ENCODE measurements at regions of chr4 and their contacts with region 1.

Region 1: DNA sequence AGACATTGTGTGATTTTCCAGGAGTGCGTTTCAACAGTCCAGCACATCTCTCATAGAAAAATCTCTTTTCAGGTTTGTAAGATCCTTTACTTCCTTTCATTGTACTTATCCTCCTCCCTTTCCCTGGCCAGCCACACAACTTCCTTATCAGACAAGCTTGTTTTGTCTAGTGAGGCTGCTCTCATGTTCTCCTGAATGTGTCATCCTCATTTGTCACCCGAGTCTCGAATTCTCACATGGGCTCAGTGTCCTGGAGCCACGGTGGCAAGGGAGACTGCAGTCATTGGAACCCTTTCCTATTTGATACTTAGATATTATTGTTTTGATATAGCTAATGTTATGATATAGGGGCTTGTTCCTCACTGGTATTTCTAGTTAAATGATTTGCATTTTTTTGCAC is 16.9 kb downstream of the SYNPO2 start:
- DNase-seq: no peak
- H3K4me3 ChIP-seq: peak overlapping the region in 1 of 2 donors; percentile 40
- H3K27ac ChIP-seq: peak overlapping the region; percentile 82 to 89
- H3K4me1 ChIP-seq: peaks cover 8 to 58% of the 10 kb centered on the region in 2 donors
- H3K27me3 ChIP-seq: no peaks in the 10 kb centered on the region
- CTCF ChIP-seq: no peak

Region 2: GRCh38 chr4:117357437-117357836 is 1548.1 kb before region 1 on chr4:
- intact Hi-C with region 1: no loop called
- DNase-seq: no peak
- H3K4me3 ChIP-seq: no peak overlapping the region
- H3K27ac ChIP-seq: no peak overlapping the region
- H3K4me1 ChIP-seq: no peaks in the 10 kb centered on the region
- H3K27me3 ChIP-seq: no peaks in the 10 kb centered on the region
- CTCF ChIP-seq: no peak

Region 3: GRCh38 chr4:118888666-118889311 is 16.8 kb before region 1 on chr4 and contains the start of gene SYNPO2:
- intact Hi-C with region 1: no loop called
- DNase-seq: peak; percentile 34 to 94
- H3K4me3 ChIP-seq: peak within 1 kb of the TSS; percentile 68 to 77
- H3K27ac ChIP-seq: peak within 1 kb of the TSS; percentile 70 to 89
- H3K4me1 ChIP-seq: peaks cover 0 to 4% of the 10 kb centered on the region in 2 donors
- H3K27me3 ChIP-seq: no peaks in the 10 kb centered on the region
- CTCF ChIP-seq: no peak
- total RNA-seq, gene SYNPO2: 178 TPM

Region 4: GRCh38 chr4:118920247-118920646 is 14.7 kb after region 1 on chr4:
- intact Hi-C with region 1: loop called (anchors 2 kb)
- DNase-seq: peak in 1 of 2 donors; percentile 75
- H3K4me3 ChIP-seq: peak overlapping the region in 1 of 2 donors; percentile 11
- H3K27ac ChIP-seq: peak overlapping the region; percentile 72 to 78
- H3K4me1 ChIP-seq: peaks cover 11 to 70% of the 10 kb centered on the region in 2 donors
- H3K27me3 ChIP-seq: no peaks in the 10 kb centered on the region
- CTCF ChIP-seq: no peak

Region 5: DNA sequence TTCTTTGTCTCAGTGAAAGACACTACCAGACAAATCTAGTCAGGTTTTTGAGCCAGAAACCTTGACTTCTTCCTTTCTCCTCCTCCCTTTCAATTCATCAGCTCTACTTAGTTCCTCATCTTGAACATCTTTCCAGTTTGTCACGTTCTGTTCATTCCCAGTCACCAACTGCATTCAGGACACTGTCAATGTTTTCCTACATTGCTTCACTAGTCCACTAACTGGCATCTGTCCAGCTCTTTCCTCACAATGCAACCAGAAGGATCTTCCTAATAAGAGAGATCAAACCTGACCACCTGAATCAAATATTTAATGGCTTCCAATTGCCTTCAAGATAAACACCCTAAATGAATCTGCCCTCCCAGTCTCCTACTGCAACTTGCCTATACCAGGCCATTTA is 35.6 kb after region 1 on chr4:
- intact Hi-C with region 1: loop called (anchors 5 kb)
- DNase-seq: peak in 1 of 2 donors; percentile 76
- H3K4me3 ChIP-seq: peak overlapping the region in 1 of 2 donors; percentile 56
- H3K27ac ChIP-seq: peak overlapping the region; percentile 85 to 90
- H3K4me1 ChIP-seq: peaks cover 3 to 43% of the 10 kb centered on the region in 2 donors
- H3K27me3 ChIP-seq: no peaks in the 10 kb centered on the region
- CTCF ChIP-seq: no peak

Region 6: DNA sequence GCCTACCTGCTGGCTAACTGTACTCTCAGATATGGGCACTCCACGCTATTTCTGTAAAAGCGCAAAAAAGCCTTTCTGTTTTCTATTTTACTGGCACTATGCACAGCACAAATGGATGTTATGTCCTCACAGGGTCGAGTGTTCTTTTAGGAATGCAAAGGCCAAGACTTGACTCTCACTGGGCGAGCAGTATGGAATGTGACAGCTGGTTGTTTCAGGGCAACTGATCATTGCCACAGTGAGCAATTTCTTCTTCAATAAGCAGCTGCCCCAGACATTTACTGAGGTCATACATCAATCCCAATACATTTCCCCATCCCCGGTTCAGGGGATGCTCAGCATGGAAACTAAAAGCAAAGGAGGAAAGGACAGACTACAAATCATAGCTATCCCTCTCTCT is 664.8 kb after region 1 on chr4:
- intact Hi-C with region 1: no loop called
- DNase-seq: no peak
- H3K4me3 ChIP-seq: no peak overlapping the region
- H3K27ac ChIP-seq: peak overlapping the region; percentile 51 to 68
- H3K4me1 ChIP-seq: peaks cover 0 to 19% of the 10 kb centered on the region in 2 donors
- H3K27me3 ChIP-seq: no peaks in the 10 kb centered on the region
- CTCF ChIP-seq: no peak

Measured in ascending aorta (tissue), 2 donors.